ENCODE measurements at regions of chr5 and their contacts with region 1.

Region 1: GRCh38 chr5:132963175-132964104 is at the start of gene AFF4:
- DNase-seq: peak; percentile 95
- ATAC-seq: peak; percentile 88
- H3K4me3 ChIP-seq: peak within 1 kb of the TSS; percentile 84
- H3K27ac ChIP-seq: peak within 1 kb of the TSS; percentile 98
- H3K4me1 ChIP-seq: peaks cover 2% of the 10 kb centered on the region; the same call in 1 of the 2 replicates
- H3K27me3 ChIP-seq: no peaks in the 10 kb centered on the region
- CTCF ChIP-seq: no peak
- POLR2A ChIP-seq: peak; percentile 98
- RAD21 ChIP-seq: no peak
- total RNA-seq, gene AFF4: 57.2 and 67.2 TPM in 2 replicates

Region 2: DNA sequence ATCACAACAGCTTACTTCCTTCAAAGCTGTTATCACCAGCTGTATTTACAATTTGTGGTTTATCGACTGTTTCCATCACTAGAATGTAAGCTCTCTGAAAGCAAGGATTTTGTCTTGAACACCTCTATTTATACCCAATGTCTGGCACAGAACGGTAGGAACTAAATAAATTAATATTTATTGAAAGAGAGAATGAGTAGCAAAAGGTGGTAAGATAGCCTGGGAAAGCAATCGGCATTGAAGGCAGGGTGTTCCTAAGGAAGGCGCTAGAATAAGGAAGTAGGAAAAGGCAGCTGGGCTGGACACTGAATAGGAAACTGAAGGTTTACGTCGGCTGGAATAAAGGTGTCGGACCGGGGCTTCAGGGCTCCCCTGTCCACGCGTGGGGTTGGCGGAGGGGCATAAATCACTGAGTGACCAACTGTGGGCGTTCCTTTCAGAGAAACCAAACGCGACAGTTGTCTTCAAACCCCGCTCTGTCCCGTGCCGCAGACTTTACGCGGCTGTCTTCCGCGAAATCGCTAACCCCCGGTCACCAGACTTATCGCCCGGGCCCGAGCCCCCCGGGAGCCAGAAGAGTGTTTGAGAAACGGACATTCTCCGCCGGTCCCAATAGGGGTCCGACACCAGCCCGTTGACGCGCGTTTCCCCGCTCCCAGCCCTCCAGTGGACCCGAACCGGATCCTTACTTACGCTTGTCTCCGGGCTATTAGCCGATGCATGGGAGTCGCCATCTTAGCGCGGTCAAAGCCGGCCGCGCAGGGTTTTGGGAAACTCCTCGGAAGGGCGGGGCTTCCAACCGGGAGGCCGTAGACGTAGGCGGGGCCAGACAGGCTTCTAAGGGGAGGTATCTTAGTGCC is 62.6 kb after region 1 on chr5 and contains the start of gene ZCCHC10:
- CTCF ChIA-PET with region 1: no interaction called
- POLR2A ChIA-PET with region 1: no interaction called
- dilution Hi-C with region 1: no loop called
- in situ Hi-C with region 1: no loop called
- intact Hi-C with region 1: loop called (anchors 2 kb)
- DNase-seq: peak; percentile 89
- ATAC-seq: peak; percentile 99
- H3K4me3 ChIP-seq: peak within 1 kb of the TSS; percentile 94
- H3K27ac ChIP-seq: peak within 1 kb of the TSS; percentile 88
- H3K4me1 ChIP-seq: no peaks in the 10 kb centered on the region
- H3K27me3 ChIP-seq: no peaks in the 10 kb centered on the region
- CTCF ChIP-seq: no peak
- POLR2A ChIP-seq: peak; percentile 95
- RAD21 ChIP-seq: no peak; the same call in 1 of the 2 replicates
- total RNA-seq, gene ZCCHC10: 4.1 and 7.2 TPM in 2 replicates

Region 3: GRCh38 chr5:133051580-133052332 is 88.3 kb after region 1 on chr5 and contains the start of gene HSPA4:
- CTCF ChIA-PET with region 1: no interaction called
- POLR2A ChIA-PET with region 1: interaction called, 3 read pairs
- dilution Hi-C with region 1: no loop called
- in situ Hi-C with region 1: no loop called
- intact Hi-C with region 1: loop called (anchors 2 kb)
- DNase-seq: peak; percentile 99
- ATAC-seq: peak; percentile 89
- H3K4me3 ChIP-seq: peak within 1 kb of the TSS; percentile 51
- H3K27ac ChIP-seq: peak within 1 kb of the TSS; percentile 93
- H3K4me1 ChIP-seq: peaks cover 5% of the 10 kb centered on the region
- H3K27me3 ChIP-seq: no peaks in the 10 kb centered on the region
- CTCF ChIP-seq: no peak
- POLR2A ChIP-seq: peak; percentile 97
- RAD21 ChIP-seq: no peak; the same call in 1 of the 2 replicates
- total RNA-seq, gene HSPA4: 120 and 192 TPM in 2 replicates

Measured in IMR-90 (cell line).